Activated naive CD4-positive, alpha-beta T cell treated with anti-CD3 and anti-CD28 coated beads for 36 hours (primary cell): ENCODE measurements at regions of chr19 and their contacts with region 1.

Region 1: GRCh38 chr19:44587963-44588770 is 25.2 kb upstream of the IGSF23 start:
- DNase-seq: peak; percentile 74
- H3K4me3 Mint-ChIP-seq: no peak overlapping the region
- H3K27ac Mint-ChIP-seq: peak overlapping the region; percentile 83
- H3K4me1 Mint-ChIP-seq: peaks cover 18% of the 10 kb centered on the region
- H3K27me3 Mint-ChIP-seq: peaks cover 4% of the 10 kb centered on the region

Region 2: GRCh38 chr19:44643605-44644401 is 55.6 kb after region 1 on chr19 and contains the start of gene PVR:
- CTCF ChIA-PET with region 1: no interaction called
- intact Hi-C with region 1: no loop called
- DNase-seq: peak; percentile 43
- H3K4me3 Mint-ChIP-seq: peak within 1 kb of the TSS; percentile 82
- H3K27ac Mint-ChIP-seq: peak within 1 kb of the TSS; percentile 71
- H3K4me1 Mint-ChIP-seq: peaks cover 2% of the 10 kb centered on the region
- H3K27me3 Mint-ChIP-seq: peaks cover 3% of the 10 kb centered on the region
- total RNA-seq, gene PVR: 8.9 to 9.8 TPM

Region 3: GRCh38 chr19:44752816-44753618 is 164.8 kb after region 1 on chr19:
- CTCF ChIA-PET with region 1: no interaction called
- intact Hi-C with region 1: loop called (anchors 1 kb)
- DNase-seq: peak; percentile 98
- H3K4me3 Mint-ChIP-seq: peak overlapping the region; percentile 93
- H3K27ac Mint-ChIP-seq: peak overlapping the region; percentile 97
- H3K4me1 Mint-ChIP-seq: peaks cover 59% of the 10 kb centered on the region
- H3K27me3 Mint-ChIP-seq: no peaks in the 10 kb centered on the region